Ovary (tissue), 10 donors: ENCODE measurements at regions of chr4 and their contacts with region 1.

Region 1: GRCh38 chr4:102352781-102353180 is 7.5 kb upstream of the SLC39A8 start:
- DNase-seq: no peak
- H3K4me3 ChIP-seq: no peak overlapping the region
- H3K27ac ChIP-seq: no peak overlapping the region
- H3K4me1 ChIP-seq: no peaks in the 10 kb centered on the region
- H3K27me3 ChIP-seq: no peaks in the 10 kb centered on the region
- CTCF ChIP-seq: no peak
- EP300 ChIP-seq: no peak
- POLR2A ChIP-seq: no peak

Region 2: GRCh38 chr4:101953949-101954348 is 398.8 kb before region 1 on chr4:
- intact Hi-C with region 1: no loop called
- DNase-seq: no peak
- H3K4me3 ChIP-seq: no peak overlapping the region
- H3K27ac ChIP-seq: no peak overlapping the region
- H3K4me1 ChIP-seq: no peaks in the 10 kb centered on the region
- H3K27me3 ChIP-seq: no peaks in the 10 kb centered on the region
- CTCF ChIP-seq: no peak
- EP300 ChIP-seq: no peak
- POLR2A ChIP-seq: no peak

Region 3: DNA sequence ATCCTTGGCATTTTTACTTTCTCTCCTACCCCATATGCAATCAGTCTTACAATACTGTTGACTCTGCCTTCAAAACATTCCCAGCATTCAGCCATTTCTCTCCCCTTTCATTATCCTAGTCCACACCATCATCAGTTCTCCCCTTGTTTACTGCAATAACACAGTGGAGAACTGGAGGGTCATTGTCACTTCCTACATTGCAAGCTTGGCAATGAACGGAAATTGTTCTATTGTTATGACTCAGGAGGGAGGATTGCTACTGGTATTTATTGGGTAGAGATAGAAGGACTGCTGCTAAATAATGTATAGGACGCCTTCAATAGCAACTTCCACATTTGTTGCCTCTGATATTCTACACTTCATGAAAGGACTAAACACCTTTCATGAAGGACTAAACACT is 330.4 kb before region 1 on chr4:
- intact Hi-C with region 1: no loop called
- DNase-seq: no peak
- H3K4me3 ChIP-seq: no peak overlapping the region
- H3K27ac ChIP-seq: no peak overlapping the region
- H3K4me1 ChIP-seq: no peaks in the 10 kb centered on the region
- H3K27me3 ChIP-seq: no peaks in the 10 kb centered on the region
- CTCF ChIP-seq: no peak
- EP300 ChIP-seq: no peak
- POLR2A ChIP-seq: no peak

Region 4: GRCh38 chr4:102420569-102421221 is 67.9 kb after region 1 on chr4:
- intact Hi-C with region 1: loop called in 1 of 4 experiments (anchors 5 kb)
- DNase-seq: no peak
- H3K4me3 ChIP-seq: no peak overlapping the region
- H3K27ac ChIP-seq: no peak overlapping the region
- H3K4me1 ChIP-seq: no peaks in the 10 kb centered on the region
- H3K27me3 ChIP-seq: no peaks in the 10 kb centered on the region
- CTCF ChIP-seq: no peak
- EP300 ChIP-seq: no peak
- POLR2A ChIP-seq: no peak